Activated CD4-positive, alpha-beta T cell treated with anti-CD3 and anti-CD28 coated beads, Interleukin-2, amount 10 ng/mL, durations not matched to agents 24 days and 14 days (primary cell): ENCODE measurements at regions of chr7 and their contacts with region 1.

Region 1: DNA sequence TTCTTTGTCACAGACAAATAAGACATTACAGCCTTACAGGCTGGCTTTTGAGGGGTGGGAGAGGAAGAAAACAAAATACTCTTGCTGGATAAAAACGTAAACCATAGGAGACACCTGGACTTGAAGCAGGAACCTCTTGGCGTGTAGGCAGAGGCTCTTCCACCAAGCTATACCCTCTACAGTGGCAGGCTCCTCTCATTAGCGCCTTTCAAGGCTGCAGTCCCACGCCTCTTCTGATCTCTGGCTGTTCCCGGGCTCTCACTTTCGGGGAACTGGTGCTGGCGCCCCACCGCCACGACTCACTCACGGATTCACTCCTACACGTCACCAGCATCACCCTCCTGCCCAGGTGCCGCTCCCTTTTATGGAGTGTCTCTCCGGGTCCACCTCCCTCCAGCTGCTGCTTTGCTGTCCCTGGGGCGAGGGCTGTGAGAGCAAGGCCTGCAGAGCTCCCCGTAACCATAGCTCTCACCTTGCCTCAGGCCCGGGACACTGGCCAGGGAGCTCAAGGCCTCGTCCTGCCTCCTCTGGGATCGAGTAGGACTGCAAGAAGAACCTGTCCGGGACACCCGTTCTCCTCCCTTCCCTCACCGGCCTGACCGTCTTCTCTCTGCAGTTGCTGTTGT is 62.6 kb downstream of the ZNF777 start:
- DNase-seq: no peak
- H3K4me3 Mint-ChIP-seq: no peak overlapping the region
- H3K27ac Mint-ChIP-seq: no peak overlapping the region
- H3K4me1 Mint-ChIP-seq: no peaks in the 10 kb centered on the region
- H3K27me3 Mint-ChIP-seq: peaks cover 31% of the 10 kb centered on the region

Region 2: GRCh38 chr7:149297034-149297755 is 101.1 kb before region 1 on chr7:
- intact Hi-C with region 1: no loop called
- DNase-seq: no peak
- H3K4me3 Mint-ChIP-seq: no peak overlapping the region
- H3K27ac Mint-ChIP-seq: peak overlapping the region; percentile 65
- H3K4me1 Mint-ChIP-seq: no peaks in the 10 kb centered on the region
- H3K27me3 Mint-ChIP-seq: no peaks in the 10 kb centered on the region

Region 3: DNA sequence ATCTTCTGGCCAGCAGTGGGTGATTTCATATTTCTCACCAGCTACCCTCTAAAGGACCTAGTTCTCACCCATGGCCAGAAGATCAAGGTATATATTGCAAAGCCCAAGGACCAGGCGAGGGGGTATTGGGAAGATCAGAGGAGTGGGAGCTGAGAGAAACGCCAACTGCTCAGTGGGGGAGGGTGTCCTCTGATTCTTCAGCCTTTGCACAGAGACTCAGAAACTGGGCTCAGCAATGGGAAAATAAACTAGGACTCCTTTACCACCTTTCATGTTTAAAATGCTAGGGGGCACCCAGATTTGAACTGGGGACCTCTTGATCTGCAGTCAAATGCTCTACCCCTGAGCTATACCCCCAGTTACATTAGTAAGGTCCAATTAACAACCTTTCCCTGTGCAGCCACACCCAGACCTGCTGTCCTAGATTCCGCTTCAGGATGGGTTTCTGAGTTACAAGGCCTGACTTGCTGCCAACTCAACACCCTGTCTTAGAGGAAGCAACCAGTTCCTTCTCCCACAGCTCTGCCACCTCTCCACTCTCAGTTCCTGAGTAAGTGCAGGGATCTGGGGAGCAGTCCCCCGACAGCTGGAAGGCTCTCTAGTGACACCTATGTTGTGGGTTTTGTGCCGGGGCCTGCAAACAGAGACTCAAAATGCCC is 42.8 kb before region 1 on chr7:
- intact Hi-C with region 1: loop called (anchors 2 kb)
- DNase-seq: no peak
- H3K4me3 Mint-ChIP-seq: no peak overlapping the region
- H3K27ac Mint-ChIP-seq: no peak overlapping the region
- H3K4me1 Mint-ChIP-seq: no peaks in the 10 kb centered on the region
- H3K27me3 Mint-ChIP-seq: peaks cover 3% of the 10 kb centered on the region